Sciatic nerve (tissue), 2 donors: ENCODE measurements at regions of chr3 and their contacts with region 1.

Region 1: GRCh38 chr3:114290911-114291901 is 2.6 kb upstream of the TIGIT start:
- DNase-seq: peak; percentile 78
- ATAC-seq: peak; percentile 77

Region 2: GRCh38 chr3:113812854-113813253 is 478.4 kb before region 1 on chr3:
- intact Hi-C with region 1: no loop called
- DNase-seq: no peak
- ATAC-seq: no peak

Region 3: GRCh38 chr3:114320246-114320645 is 29.0 kb after region 1 on chr3:
- intact Hi-C with region 1: loop called (anchors 2 kb)
- DNase-seq: no peak
- ATAC-seq: no peak